ENCODE measurements at regions of chr2 and their contacts with region 1.

Region 1: DNA sequence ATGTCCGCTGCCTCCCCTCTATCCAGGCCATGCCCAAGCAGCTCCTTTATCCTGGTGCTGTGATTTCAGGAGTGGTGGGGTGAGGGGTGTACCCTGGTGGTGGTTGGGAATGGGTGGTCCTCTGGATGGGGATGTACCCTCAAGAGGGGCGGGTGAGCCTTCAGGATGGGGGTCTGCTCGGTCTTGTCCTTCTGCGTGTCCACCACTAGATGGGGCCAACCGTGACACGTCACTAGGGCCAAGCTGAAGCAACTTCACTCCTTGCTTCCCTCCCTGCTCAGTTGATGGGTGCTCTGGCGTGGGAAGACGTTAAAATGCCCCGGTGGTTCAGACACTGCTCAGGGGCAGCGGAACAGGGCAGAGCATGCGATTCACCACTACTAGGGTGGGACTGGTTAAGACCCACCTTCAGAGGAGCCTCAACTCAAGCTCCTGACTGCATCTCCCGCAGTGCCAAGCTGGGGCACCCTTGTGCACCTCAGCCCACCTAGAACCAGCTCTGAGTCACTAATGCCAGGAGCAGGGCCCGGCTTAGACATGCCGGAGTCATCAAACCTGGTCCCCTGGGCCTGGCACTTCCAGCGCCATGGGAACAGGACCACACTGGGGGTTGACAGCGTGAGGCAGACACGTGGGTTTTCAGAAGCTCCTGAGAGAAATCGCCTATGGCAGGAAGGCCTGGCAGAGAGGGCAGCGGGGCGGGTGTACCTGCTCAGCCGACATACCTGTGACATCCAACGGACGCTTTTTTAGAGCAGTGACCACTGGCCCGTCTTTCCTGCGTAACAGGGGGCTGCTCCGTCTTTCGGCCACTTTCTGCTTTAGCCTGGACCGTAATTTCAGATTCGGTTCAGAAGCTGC is 256.7 kb downstream of the HDAC4 start:
- DNase-seq: no peak
- ATAC-seq: peak; percentile 39
- H3K4me3 ChIP-seq: no peak overlapping the region
- H3K27ac ChIP-seq: no peak overlapping the region
- H3K4me1 ChIP-seq: no peaks in the 10 kb centered on the region
- H3K27me3 ChIP-seq: no peaks in the 10 kb centered on the region

Region 2: GRCh38 chr2:239055756-239056493 is 88.2 kb before region 1 on chr2:
- intact Hi-C with region 1: no loop called
- DNase-seq: peak in 1 of 2 donors; percentile 62
- ATAC-seq: no peak
- H3K4me3 ChIP-seq: no peak overlapping the region
- H3K27ac ChIP-seq: no peak overlapping the region
- H3K4me1 ChIP-seq: no peaks in the 10 kb centered on the region
- H3K27me3 ChIP-seq: no peaks in the 10 kb centered on the region

Region 3: GRCh38 chr2:239293775-239294430 is 149.8 kb after region 1 on chr2:
- intact Hi-C with region 1: loop called in 1 of 2 experiments (anchors 10 kb)
- DNase-seq: peak; percentile 19 to 69
- ATAC-seq: no peak
- H3K4me3 ChIP-seq: no peak overlapping the region
- H3K27ac ChIP-seq: no peak overlapping the region
- H3K4me1 ChIP-seq: peaks cover 0 to 3% of the 10 kb centered on the region in 2 donors
- H3K27me3 ChIP-seq: no peaks in the 10 kb centered on the region

Measured in aorta (tissue), 5 donors.